Colonic mucosa (tissue), 4 donors: ENCODE measurements at regions of chr5 and their contacts with region 1.

Region 1: GRCh38 chr5:173293817-173294672 is 34.2 kb downstream of the STC2 start:
- DNase-seq: peak; percentile 68
- H3K4me3 ChIP-seq: no peak overlapping the region
- H3K27ac ChIP-seq: no peak overlapping the region
- H3K4me1 ChIP-seq: no peaks in the 10 kb centered on the region
- H3K27me3 ChIP-seq: peaks cover 20% of the 10 kb centered on the region
- CTCF ChIP-seq: peak; percentile 80

Region 2: GRCh38 chr5:173035904-173036707 is 257.9 kb before region 1 on chr5:
- intact Hi-C with region 1: no loop called
- DNase-seq: no peak
- H3K4me3 ChIP-seq: no peak overlapping the region
- H3K27ac ChIP-seq: peak overlapping the region; percentile 63
- H3K4me1 ChIP-seq: no peaks in the 10 kb centered on the region
- H3K27me3 ChIP-seq: no peaks in the 10 kb centered on the region
- CTCF ChIP-seq: no peak

Region 3: DNA sequence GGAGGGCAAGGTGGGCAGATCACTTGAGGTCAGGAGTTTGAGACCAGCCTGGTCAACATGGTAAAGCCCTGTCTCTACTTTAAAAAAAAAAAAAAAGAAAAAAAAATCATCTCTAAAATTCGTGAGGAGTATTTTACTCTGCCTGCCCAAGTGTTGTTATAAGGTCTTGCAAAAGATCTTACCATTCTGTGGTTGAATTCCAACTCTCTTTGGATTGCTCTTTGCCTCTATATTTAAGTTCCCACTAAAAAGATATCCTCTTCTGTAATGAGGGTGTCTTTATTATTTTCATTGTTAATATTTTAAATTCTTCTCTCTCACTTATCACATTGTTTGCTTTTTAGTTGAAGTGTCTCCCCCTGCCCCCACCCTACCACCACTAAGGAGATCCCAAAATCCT is 204.5 kb before region 1 on chr5:
- intact Hi-C with region 1: no loop called
- DNase-seq: no peak
- H3K4me3 ChIP-seq: no peak overlapping the region
- H3K27ac ChIP-seq: no peak overlapping the region
- H3K4me1 ChIP-seq: no peaks in the 10 kb centered on the region
- H3K27me3 ChIP-seq: no peaks in the 10 kb centered on the region
- CTCF ChIP-seq: no peak

Region 4: GRCh38 chr5:173331956-173332479 is 38.0 kb after region 1 on chr5:
- intact Hi-C with region 1: loop called (anchors 2 kb)
- DNase-seq: peak; percentile 82
- H3K4me3 ChIP-seq: no peak overlapping the region
- H3K27ac ChIP-seq: no peak overlapping the region
- H3K4me1 ChIP-seq: peaks cover 3% of the 10 kb centered on the region
- H3K27me3 ChIP-seq: peaks cover 39% of the 10 kb centered on the region
- CTCF ChIP-seq: peak; percentile 85

Region 5: DNA sequence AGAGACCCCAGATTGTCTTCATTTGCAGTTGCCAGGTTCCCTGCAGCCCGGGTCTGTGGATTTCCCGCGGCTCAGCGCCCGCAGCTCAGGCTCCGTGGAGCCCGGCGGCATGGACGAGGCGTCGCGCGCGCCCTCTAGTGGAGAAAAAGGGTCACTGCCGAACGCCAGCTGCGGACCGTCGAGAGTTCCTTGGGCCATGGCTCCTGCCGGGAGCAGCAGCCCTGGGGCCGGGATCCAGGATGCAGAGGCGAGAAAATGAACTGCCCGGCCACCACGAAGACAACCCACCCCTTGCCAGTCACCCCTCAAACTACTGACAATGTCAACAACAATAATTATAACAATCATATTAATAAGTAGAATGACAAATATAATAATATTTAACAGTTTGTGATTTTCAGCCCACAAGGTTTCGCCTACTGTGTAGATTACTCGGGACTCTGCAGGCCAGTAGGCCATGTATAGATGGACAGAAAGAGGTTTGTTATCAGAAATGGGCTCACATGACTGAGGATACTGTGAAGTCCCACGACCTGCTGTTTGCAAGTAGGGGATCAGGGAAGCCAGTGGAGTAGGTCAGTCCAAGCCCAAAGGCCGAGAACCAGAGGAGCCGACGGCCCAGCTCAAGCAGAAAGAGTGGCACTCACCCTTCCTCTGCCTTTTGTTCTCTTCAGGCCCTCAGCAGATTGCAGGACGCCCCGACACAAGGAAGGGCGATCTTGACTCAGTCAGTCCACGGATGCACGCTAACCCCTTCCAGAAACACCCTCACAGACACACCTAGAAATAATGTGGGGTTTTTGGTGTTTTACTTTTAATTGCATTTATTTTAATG is 279.3 kb after region 1 on chr5:
- intact Hi-C with region 1: loop called (anchors 5 kb)
- DNase-seq: peak; percentile 73
- H3K4me3 ChIP-seq: no peak overlapping the region
- H3K27ac ChIP-seq: no peak overlapping the region
- H3K4me1 ChIP-seq: no peaks in the 10 kb centered on the region
- H3K27me3 ChIP-seq: no peaks in the 10 kb centered on the region
- CTCF ChIP-seq: peak; percentile 98